Esophagus muscularis mucosa (tissue), 4 donors: ENCODE measurements at regions of chr5 and their contacts with region 1.

Region 1: DNA sequence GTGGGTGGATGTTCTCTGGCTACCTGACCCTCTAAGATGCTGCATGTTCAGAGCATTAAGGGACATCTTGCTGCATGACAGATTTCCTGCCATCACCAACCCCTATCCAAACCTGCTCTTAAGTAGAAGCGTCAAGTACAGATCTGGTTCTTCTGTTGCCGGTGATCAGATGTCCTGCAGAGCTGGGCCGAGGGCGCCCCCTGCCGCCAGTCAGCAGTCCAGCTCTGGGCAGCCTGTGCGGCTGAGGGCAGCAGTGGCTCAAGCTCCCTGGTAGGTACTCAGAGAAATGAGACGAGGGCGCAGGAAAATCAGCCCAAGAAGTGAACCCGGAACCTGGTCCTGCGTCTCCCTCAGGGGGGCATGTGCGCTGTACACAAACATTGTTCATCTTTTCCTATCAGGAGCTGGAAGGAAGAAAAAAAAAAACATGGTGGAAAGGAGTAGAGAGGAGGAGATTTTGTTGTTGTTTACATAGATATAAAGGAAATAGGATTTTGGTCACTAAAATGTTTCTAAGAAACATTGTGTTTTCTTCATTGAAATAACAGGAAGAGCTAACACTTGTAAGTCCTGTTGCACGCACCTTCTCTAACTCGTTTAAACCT is 95.8 kb downstream of the CFAP90 start:
- DNase-seq: no peak
- H3K4me3 ChIP-seq: no peak overlapping the region
- H3K27ac ChIP-seq: no peak overlapping the region
- H3K4me1 ChIP-seq: no peaks in the 10 kb centered on the region
- H3K27me3 ChIP-seq: no peaks in the 10 kb centered on the region
- CTCF ChIP-seq: peak; percentile 48 to 73 (median 51)
- EP300 ChIP-seq: no peak
- POLR2A ChIP-seq: no peak

Region 2: DNA sequence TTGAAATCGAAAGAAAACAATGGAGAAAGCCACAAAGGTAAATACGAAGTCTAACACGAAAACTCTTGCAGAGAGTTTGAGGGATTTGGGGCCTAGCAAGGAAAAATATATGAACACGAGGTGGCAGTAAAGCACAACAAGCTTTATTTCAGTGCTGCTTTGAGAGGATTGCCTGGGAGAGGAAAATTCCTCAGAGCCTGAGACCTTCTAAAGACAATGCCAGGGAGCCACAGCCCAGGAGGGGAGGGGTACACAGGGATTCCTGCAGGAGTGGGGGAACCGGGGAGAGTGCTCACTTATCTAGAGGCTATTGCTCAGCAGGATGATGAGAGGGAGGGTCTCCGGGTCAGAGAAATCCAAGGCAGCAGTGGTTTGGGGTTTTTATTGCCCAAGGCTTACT is 494.0 kb before region 1 on chr5:
- intact Hi-C with region 1: loop called (anchors 5 kb)
- DNase-seq: peak; percentile 89
- H3K4me3 ChIP-seq: no peak overlapping the region
- H3K27ac ChIP-seq: no peak overlapping the region
- H3K4me1 ChIP-seq: no peaks in the 10 kb centered on the region
- H3K27me3 ChIP-seq: no peaks in the 10 kb centered on the region
- CTCF ChIP-seq: peak; percentile 40 to 65 (median 53)
- EP300 ChIP-seq: no peak
- POLR2A ChIP-seq: no peak